Dorsolateral prefrontal cortex (tissue), 120 donors: ENCODE measurements at regions of chr7 and their contacts with region 1.

Region 1: GRCh38 chr7:82057476-82057875 is 287.6 kb upstream of the HGF start:
- DNase-seq: no peak
- H3K4me3 ChIP-seq: no peak overlapping the region
- H3K27ac ChIP-seq: no peak overlapping the region
- H3K27me3 ChIP-seq: no peaks in the 10 kb centered on the region
- CTCF ChIP-seq: no peak

Region 2: GRCh38 chr7:82019551-82020475 is 37.7 kb before region 1 on chr7:
- intact Hi-C with region 1: no loop called
- DNase-seq: no peak
- H3K4me3 ChIP-seq: no peak overlapping the region
- H3K27ac ChIP-seq: no peak overlapping the region
- H3K27me3 ChIP-seq: no peaks in the 10 kb centered on the region
- CTCF ChIP-seq: no peak

Region 3: DNA sequence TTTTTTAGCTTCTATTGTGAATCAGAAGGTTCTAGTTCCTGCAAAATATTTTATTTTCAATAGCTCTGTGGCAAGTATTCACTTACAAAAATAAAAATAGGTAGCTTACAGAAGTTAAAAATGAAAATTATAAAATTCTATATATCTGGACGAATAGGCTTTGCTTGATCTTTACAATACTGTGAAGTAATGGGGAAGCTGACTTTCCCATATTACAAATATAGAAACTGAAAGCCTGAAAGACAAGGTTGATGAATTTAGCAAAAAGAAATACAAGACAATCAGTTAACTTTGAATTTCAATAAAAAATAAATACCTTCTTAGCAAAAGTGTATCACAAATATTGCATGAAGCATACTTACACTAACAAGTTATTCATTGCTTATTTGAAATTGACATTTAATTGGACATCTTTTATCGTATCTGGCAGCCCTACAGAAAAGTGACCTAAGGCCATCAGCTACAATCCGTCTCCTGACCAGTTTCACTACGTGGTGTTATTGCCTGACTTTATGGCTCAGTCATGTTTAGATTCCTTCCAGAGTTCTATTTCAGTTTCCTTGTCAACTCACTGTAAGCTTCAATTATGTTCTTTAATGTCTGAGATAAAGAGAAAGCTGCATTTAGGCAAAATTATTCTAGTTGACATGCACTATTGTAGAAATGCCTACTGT is 22.9 kb after region 1 on chr7:
- intact Hi-C with region 1: loop called in 1 of 2 experiments (anchors 1 kb)
- DNase-seq: no peak
- H3K4me3 ChIP-seq: no peak overlapping the region
- H3K27ac ChIP-seq: no peak overlapping the region
- H3K27me3 ChIP-seq: no peaks in the 10 kb centered on the region
- CTCF ChIP-seq: no peak